HEK293 (cell line): ENCODE measurements at regions of chr1 and their contacts with region 1.

Region 1: GRCh38 chr1:6523566-6523965 is 30.7 kb downstream of the NOL9 start:
- H3K4me3 ChIP-seq: no peak overlapping the region
- H3K27ac ChIP-seq: no peak overlapping the region
- H3K4me1 ChIP-seq: peaks cover 5% of the 10 kb centered on the region; the same call in 1 of the 2 replicates
- CTCF ChIP-seq: peak; percentile 44; the same call in 1 of the 2 replicates

Region 2: GRCh38 chr1:6489799-6490180 is 33.8 kb before region 1 on chr1:
- CTCF ChIA-PET with region 1: interaction called, 40 read pairs
- POLR2A ChIA-PET with region 1: interaction called, 3 read pairs
- H3K4me3 ChIP-seq: peak overlapping the region; percentile 72
- H3K27ac ChIP-seq: peak overlapping the region; percentile 67; the same call in 1 of the 2 replicates
- H3K4me1 ChIP-seq: no peaks in the 10 kb centered on the region
- CTCF ChIP-seq: peak; percentile 89

Region 3: GRCh38 chr1:6513320-6513801 is 10.2 kb before region 1 on chr1:
- CTCF ChIA-PET with region 1: interaction called, 27 read pairs
- POLR2A ChIA-PET with region 1: no interaction called
- H3K4me3 ChIP-seq: no peak overlapping the region
- H3K27ac ChIP-seq: no peak overlapping the region
- H3K4me1 ChIP-seq: no peaks in the 10 kb centered on the region
- CTCF ChIP-seq: no peak

Region 4: GRCh38 chr1:6535214-6535613 is 11.6 kb after region 1 on chr1:
- CTCF ChIA-PET with region 1: interaction called, 14 read pairs
- POLR2A ChIA-PET with region 1: interaction called, 3 read pairs
- H3K4me3 ChIP-seq: no peak overlapping the region
- H3K27ac ChIP-seq: no peak overlapping the region
- H3K4me1 ChIP-seq: no peaks in the 10 kb centered on the region
- CTCF ChIP-seq: no peak

Region 5: GRCh38 chr1:6704746-6705145 is 181.2 kb after region 1 on chr1:
- CTCF ChIA-PET with region 1: no interaction called
- POLR2A ChIA-PET with region 1: no interaction called
- H3K4me3 ChIP-seq: no peak overlapping the region
- H3K27ac ChIP-seq: no peak overlapping the region
- H3K4me1 ChIP-seq: no peaks in the 10 kb centered on the region
- CTCF ChIP-seq: no peak